ENCODE measurements at regions of chr15 and their contacts with region 1.

Region 1: DNA sequence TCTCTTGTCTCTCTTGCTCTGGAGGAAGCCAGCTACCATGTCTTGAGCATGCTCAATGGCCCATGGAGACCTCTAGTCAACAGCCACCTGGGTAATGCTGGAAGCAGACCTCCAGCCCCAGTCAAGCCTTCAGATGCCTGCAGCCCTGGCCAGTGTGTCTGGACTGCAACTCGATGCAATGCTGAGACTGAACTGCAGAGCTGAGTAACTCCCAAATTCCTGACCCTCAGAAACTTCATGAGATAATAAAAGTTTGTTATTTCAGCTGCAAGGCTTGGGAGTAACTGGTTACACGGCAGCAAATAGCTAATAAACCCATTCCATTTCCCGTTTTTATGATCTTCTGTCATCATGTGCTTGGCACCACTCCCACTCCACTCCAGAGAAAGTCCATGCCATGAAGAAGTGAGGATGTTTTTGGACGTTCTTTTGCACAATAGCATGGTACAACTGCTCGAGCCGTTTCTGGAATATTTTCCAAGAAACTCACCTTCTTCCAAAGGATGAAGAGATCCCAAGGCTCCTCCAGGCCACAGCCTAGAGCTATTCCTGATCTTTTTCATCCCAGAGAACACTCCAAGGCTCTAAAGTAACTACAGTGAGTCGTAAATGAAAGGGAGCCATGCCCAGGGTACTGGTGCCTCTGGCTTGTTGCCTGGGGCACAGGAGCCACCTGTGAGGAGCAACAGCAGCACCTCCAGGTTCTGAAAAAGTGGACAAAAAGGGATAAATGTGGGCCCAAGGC is 72.0 kb upstream of the KLF13 start:
- DNase-seq: peak; percentile 26
- ATAC-seq: peak; percentile 55
- H3K4me3 ChIP-seq: no peak overlapping the region
- H3K27ac ChIP-seq: no peak overlapping the region
- H3K4me1 ChIP-seq: no peaks in the 10 kb centered on the region
- H3K27me3 ChIP-seq: no peaks in the 10 kb centered on the region
- CTCF ChIP-seq: no peak

Region 2: GRCh38 chr15:31098953-31099740 is 155.5 kb before region 1 on chr15:
- intact Hi-C with region 1: no loop called
- DNase-seq: no peak
- ATAC-seq: no peak
- H3K4me3 ChIP-seq: no peak overlapping the region
- H3K27ac ChIP-seq: no peak overlapping the region
- H3K4me1 ChIP-seq: no peaks in the 10 kb centered on the region
- H3K27me3 ChIP-seq: no peaks in the 10 kb centered on the region
- CTCF ChIP-seq: no peak

Region 3: GRCh38 chr15:31302778-31303725 is 48.4 kb after region 1 on chr15:
- intact Hi-C with region 1: loop called (anchors 10 kb)
- DNase-seq: peak; percentile 76
- ATAC-seq: peak; percentile 60
- H3K4me3 ChIP-seq: no peak overlapping the region
- H3K27ac ChIP-seq: no peak overlapping the region
- H3K4me1 ChIP-seq: peaks cover 20% of the 10 kb centered on the region
- H3K27me3 ChIP-seq: peaks cover 3% of the 10 kb centered on the region
- CTCF ChIP-seq: peak; percentile 22

Measured in upper lobe of right lung (tissue), 1 donor.